HAP-1 (cell line): ENCODE measurements at regions of chr7 and their contacts with region 1.

Region 1: DNA sequence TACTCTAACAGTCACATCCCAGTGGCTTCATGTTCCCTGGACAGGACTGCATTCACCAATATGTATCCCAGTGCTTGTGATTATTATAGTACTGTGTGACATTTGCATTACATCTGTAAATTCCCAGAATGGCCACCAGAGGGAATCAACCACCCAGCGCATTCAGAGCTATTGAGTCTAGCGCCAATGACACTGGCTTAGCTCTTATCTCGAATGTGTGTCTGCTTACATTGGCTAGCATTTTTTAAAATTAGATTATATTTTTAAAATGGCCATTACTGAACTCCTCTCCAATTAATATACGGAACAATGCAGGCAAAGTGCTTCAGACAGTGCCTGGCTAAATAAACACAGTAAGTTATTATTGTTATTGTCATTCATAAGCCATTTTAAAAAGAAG is 36.3 kb downstream of the TRIL start:
- DNase-seq: peak; percentile 68 to 72
- H3K4me3 ChIP-seq: no peak overlapping the region
- H3K4me1 ChIP-seq: peaks cover 10% of the 10 kb centered on the region
- H3K27me3 ChIP-seq: no peaks in the 10 kb centered on the region

Region 2: GRCh38 chr7:28654110-28654509 is 267.7 kb before region 1 on chr7:
- in situ Hi-C with region 1: no loop called
- DNase-seq: no peak
- H3K4me3 ChIP-seq: no peak overlapping the region
- H3K4me1 ChIP-seq: no peaks in the 10 kb centered on the region
- H3K27me3 ChIP-seq: peaks cover 16% of the 10 kb centered on the region

Region 3: DNA sequence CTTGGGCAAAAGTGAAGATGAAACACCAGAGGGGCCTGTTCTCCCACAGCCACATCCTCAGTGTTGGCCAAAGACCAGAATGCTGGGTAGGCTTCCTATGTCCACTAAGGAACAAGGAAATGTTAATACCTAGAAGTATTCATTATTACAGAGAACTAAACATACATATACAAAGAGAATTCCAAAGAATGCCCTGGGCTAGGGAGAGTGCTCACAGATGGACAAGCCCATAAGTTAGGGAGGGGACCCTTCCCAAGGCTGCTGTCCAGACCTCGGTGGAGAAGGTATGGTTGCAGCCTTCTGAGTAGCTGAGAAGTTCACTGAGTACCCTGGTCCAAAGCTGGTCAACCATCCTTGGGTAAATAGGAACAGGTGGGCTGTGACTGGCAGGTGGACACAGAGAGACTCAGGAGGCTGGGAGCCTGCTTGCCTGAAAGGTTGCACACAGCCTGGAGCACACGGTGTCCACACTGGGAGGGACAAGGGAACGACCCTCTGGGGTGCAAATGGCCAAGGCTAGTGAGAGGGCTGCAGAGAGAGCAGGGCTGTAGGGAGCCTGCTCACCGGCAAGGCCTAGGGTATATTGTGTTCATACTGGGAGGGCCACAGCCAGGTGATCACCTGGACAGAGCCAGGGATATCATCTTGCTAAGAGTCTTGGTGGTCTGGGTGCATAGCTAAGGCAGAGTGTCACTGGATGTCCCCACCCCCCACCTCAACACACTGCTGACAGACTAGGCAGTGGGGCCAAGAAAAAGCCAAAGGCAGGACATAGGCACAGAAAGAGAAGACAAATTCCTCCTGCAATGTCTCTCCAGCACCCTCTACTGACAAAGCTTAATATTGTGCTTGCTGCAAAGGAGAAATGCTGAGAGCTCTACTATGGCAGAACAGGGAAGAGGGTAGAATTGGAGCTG is 184.2 kb after region 1 on chr7:
- in situ Hi-C with region 1: loop called (anchors 5 kb)
- DNase-seq: peak; percentile 60 to 63
- H3K4me3 ChIP-seq: no peak overlapping the region
- H3K4me1 ChIP-seq: no peaks in the 10 kb centered on the region; the same call in 1 of the 2 replicates
- H3K27me3 ChIP-seq: no peaks in the 10 kb centered on the region